ENCODE measurements at regions of chr16 and their contacts with region 1.

Region 1: GRCh38 chr16:10737068-10737625 is 6.5 kb upstream of the NUBP1 start:
- DNase-seq: no peak
- ATAC-seq: peak; percentile 65
- H3K4me3 Mint-ChIP-seq: peak overlapping the region; percentile 68
- H3K27ac Mint-ChIP-seq: peak overlapping the region; percentile 90
- H3K4me1 Mint-ChIP-seq: peaks cover 51% of the 10 kb centered on the region
- H3K27me3 Mint-ChIP-seq: no peaks in the 10 kb centered on the region
- CTCF ChIP-seq: peak; percentile 60

Region 2: GRCh38 chr16:10256784-10257641 is 480.1 kb before region 1 on chr16:
- CTCF ChIA-PET with region 1: interaction called, 6 read pairs
- POLR2A ChIA-PET with region 1: interaction called, 4 read pairs
- intact Hi-C with region 1: loop called (anchors 1 kb)
- DNase-seq: peak; percentile 56
- ATAC-seq: peak; percentile 83
- H3K4me3 Mint-ChIP-seq: peak overlapping the region; percentile 71
- H3K27ac Mint-ChIP-seq: peak overlapping the region; percentile 47
- H3K4me1 Mint-ChIP-seq: peaks cover 42% of the 10 kb centered on the region
- H3K27me3 Mint-ChIP-seq: no peaks in the 10 kb centered on the region
- CTCF ChIP-seq: no peak

Region 3: DNA sequence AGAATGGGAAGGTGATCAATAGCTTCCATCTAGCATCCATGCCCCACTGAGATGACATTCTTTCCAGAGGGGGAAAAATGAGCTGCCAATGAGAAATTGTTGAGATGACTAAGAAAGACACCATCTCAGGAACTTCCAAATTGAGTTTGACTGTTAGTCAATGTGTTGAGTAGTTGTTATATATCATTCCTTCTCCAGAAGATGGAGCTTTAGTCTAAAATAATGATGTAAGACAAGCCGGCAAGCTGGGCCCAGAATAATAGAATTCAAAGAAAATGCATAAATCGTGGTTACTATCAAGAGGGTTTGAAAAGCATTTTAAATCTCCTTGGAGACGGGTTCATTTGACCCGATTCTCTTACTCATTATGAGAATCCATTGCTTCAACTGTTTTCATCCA is 422.3 kb before region 1 on chr16:
- CTCF ChIA-PET with region 1: interaction called, 3 read pairs
- POLR2A ChIA-PET with region 1: no interaction called
- intact Hi-C with region 1: loop called (anchors 1 kb)
- DNase-seq: no peak
- ATAC-seq: no peak
- H3K4me3 Mint-ChIP-seq: no peak overlapping the region
- H3K27ac Mint-ChIP-seq: peak overlapping the region; percentile 63
- H3K4me1 Mint-ChIP-seq: peaks cover 22% of the 10 kb centered on the region
- H3K27me3 Mint-ChIP-seq: no peaks in the 10 kb centered on the region
- CTCF ChIP-seq: no peak

Region 4: GRCh38 chr16:10521681-10522274 is 215.4 kb before region 1 on chr16:
- CTCF ChIA-PET with region 1: interaction called, 137 read pairs
- POLR2A ChIA-PET with region 1: interaction called, 5 read pairs
- intact Hi-C with region 1: loop called (anchors 1 kb)
- DNase-seq: no peak
- ATAC-seq: peak; percentile 88
- H3K4me3 Mint-ChIP-seq: no peak overlapping the region
- H3K27ac Mint-ChIP-seq: no peak overlapping the region
- H3K4me1 Mint-ChIP-seq: peaks cover 4% of the 10 kb centered on the region
- H3K27me3 Mint-ChIP-seq: no peaks in the 10 kb centered on the region
- CTCF ChIP-seq: no peak

Region 5: DNA sequence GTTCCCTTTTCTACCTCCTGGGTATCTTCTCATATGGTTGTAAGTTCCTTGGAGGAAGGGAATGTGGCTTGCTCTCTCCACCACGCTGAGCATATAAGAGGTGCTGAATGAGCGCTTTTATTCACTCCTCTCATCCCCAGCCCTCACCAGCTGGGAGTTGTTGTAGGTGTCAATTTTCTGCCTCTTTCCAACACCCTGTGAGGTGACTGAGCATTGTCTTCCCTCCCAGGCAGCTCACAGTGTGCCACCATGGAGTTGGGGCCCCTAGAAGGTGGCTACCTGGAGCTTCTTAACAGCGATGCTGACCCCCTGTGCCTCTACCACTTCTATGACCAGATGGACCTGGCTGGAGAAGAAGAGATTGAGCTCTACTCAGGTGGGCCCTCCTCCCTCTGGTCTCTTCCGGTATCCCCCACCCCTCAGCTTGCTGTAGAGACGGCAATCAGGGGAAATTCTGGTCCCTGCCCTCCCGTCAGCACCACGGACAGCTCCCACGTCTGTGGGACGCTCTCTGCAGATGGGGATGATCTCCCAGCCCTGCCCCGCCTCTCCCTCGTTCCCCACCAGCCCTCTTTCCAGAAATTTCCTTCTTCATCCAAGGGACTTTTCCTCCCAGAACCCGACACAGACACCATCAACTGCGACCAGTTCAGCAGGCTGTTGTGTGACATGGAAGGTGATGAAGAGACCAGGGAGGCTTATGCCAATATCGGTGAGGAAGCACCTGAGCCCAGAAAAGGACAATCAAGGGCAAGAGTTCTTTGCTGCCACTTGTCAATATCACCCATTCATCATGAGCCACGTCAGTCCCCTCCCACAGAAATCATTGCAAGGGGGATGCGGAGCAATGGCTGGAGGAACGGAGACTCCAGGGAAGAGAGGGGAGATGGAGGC is 158.2 kb after region 1 on chr16:
- CTCF ChIA-PET with region 1: no interaction called
- POLR2A ChIA-PET with region 1: interaction called, 40 read pairs
- intact Hi-C with region 1: no loop called
- DNase-seq: peak; percentile 60
- ATAC-seq: no peak
- H3K4me3 Mint-ChIP-seq: peak overlapping the region; percentile 67
- H3K27ac Mint-ChIP-seq: peak overlapping the region; percentile 91
- H3K4me1 Mint-ChIP-seq: peaks cover 99% of the 10 kb centered on the region
- H3K27me3 Mint-ChIP-seq: no peaks in the 10 kb centered on the region
- CTCF ChIP-seq: no peak

Measured in activated B cell treated with CpG ODN at 0.5 μM for 24 hours (primary cell).